Activated CD4-positive, alpha-beta memory T cell treated with anti-CD3 and anti-CD28 coated beads for 36 hours (primary cell): ENCODE measurements at regions of chr11 and their contacts with region 1.

Region 1: GRCh38 chr11:58958500-58958899 is 19.2 kb downstream of the GLYATL1 start:
- DNase-seq: peak; percentile 53
- H3K4me3 Mint-ChIP-seq: no peak overlapping the region
- H3K27ac Mint-ChIP-seq: no peak overlapping the region
- H3K4me1 Mint-ChIP-seq: peaks cover 3% of the 10 kb centered on the region
- H3K27me3 Mint-ChIP-seq: peaks cover 6% of the 10 kb centered on the region

Region 2: DNA sequence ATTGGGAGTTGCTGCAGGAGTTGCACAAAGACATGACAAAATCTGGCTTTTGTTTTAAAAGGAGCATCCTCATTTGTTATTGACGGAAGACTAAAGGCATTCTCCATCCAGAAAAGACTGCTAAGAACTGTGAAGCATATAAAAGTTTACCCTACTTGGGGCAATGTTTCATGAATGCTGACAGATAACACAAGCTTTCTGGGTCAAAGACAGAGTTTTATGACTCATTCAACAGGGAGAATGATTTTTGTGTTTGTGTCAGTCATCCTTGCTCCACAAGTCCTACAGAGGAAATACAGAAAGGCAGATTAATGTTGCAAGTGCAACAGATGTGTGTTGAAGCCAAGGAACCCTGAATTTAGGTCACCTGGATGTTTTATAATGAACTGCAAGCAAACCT is 16.7 kb before region 1 on chr11:
- CTCF ChIA-PET with region 1: no interaction called
- POLR2A ChIA-PET with region 1: no interaction called
- intact Hi-C with region 1: no loop called
- DNase-seq: no peak
- H3K4me3 Mint-ChIP-seq: no peak overlapping the region
- H3K27ac Mint-ChIP-seq: no peak overlapping the region
- H3K4me1 Mint-ChIP-seq: no peaks in the 10 kb centered on the region
- H3K27me3 Mint-ChIP-seq: peaks cover 7% of the 10 kb centered on the region

Region 3: DNA sequence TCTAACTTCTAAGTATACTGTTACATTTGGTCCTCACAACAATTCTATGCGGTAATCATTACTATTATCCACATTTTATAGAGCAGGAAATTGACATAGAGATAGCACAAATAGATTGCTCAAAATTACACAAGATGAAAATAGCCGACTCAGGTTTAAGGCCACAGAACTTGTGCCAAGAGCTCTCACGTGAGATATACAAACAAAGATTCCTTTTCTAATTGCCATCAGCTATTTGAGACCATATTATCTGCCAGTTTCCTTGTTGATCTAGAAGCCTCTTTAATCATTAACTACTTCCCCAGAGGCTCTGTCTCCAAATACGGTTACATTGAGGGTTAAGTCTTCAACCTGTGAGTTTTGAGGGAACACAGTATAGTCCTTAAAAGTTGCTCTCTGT is 66.6 kb after region 1 on chr11:
- CTCF ChIA-PET with region 1: no interaction called
- POLR2A ChIA-PET with region 1: no interaction called
- intact Hi-C with region 1: no loop called
- DNase-seq: no peak
- H3K4me3 Mint-ChIP-seq: no peak overlapping the region
- H3K27ac Mint-ChIP-seq: no peak overlapping the region
- H3K4me1 Mint-ChIP-seq: no peaks in the 10 kb centered on the region
- H3K27me3 Mint-ChIP-seq: peaks cover 4% of the 10 kb centered on the region

Region 4: DNA sequence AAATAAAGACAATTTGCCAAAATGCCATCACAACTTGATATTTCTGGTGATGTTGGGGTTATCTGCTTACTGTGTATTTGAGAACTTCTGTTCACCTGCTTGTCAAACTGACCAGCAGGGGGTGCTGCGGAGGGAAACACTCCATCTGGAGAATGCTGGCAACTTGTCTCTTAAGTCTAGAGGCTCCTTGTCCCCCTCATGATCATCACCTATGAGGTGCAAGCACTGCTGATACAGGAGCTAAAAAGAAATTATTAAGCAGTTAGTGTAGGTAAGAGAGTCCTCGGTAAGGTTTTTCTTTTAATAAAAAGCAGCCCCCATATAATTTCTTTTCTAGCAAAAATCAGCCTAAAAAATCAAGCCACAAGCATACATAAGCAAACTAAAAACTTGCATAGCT is 94.9 kb after region 1 on chr11:
- CTCF ChIA-PET with region 1: interaction called, 3 read pairs
- POLR2A ChIA-PET with region 1: no interaction called
- intact Hi-C with region 1: loop called (anchors 5 kb)
- DNase-seq: peak; percentile 86
- H3K4me3 Mint-ChIP-seq: no peak overlapping the region
- H3K27ac Mint-ChIP-seq: no peak overlapping the region
- H3K4me1 Mint-ChIP-seq: peaks cover 4% of the 10 kb centered on the region
- H3K27me3 Mint-ChIP-seq: peaks cover 17% of the 10 kb centered on the region